MCF 10A (cell line): ENCODE measurements at regions of chr2 and their contacts with region 1.

Region 1: DNA sequence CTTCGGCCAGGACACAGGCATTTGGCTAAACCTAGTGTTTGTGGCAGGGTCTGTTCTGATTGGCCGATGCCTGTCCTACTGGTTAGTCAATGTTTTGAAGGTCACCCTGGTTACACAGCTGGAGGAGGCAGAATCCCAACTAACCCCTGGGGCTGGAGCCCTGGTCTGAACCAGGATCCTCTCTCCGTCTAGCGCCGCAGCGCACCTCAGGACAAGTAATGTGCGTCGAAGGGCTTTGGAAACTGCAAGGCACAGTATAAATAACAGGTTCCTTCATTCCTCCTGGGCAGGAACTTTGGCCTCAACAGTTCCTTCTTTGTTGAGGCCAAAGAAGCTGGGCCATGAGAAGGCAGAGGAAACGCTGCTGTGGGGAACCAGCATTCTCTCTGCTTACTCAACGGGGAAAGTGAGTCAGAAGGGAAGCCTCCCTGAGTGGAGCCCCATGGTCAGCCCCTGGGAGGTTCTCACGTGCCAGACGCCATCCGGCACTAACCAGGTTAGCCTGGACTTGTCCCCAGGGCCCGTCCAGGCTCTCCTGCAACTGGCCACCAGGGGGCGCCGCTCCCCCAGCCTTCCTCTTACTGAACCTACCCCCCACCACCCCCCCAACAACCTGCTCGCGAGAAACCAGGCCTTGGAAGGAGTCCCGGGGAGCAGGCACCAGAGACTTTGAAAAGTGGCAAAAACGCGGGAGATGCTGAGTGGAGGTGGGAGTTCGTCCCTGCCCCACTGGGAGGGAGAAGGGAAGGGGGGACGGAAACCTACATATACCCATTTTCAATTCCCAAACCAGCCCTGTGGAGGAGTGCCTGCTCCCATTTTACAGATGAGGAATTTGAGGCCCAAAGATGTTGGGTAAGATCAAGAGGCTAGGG is 19.8 kb downstream of the TEX44 start:
- DNase-seq: peak; percentile 95
- H3K4me3 Mint-ChIP-seq: peak overlapping the region; percentile 63
- H3K27ac Mint-ChIP-seq: peak overlapping the region; percentile 92
- H3K4me1 Mint-ChIP-seq: peaks cover 38% of the 10 kb centered on the region
- H3K27me3 Mint-ChIP-seq: no peaks in the 10 kb centered on the region
- CTCF ChIP-seq: peak; percentile 95

Region 2: GRCh38 chr2:231648587-231649174 is 36.3 kb after region 1 on chr2:
- CTCF ChIA-PET with region 1: interaction called, 20 read pairs
- POLR2A ChIA-PET with region 1: interaction called, 36 read pairs
- intact Hi-C with region 1: no loop called
- DNase-seq: peak; percentile 86
- H3K4me3 Mint-ChIP-seq: no peak overlapping the region
- H3K27ac Mint-ChIP-seq: no peak overlapping the region
- H3K4me1 Mint-ChIP-seq: peaks cover 16% of the 10 kb centered on the region
- H3K27me3 Mint-ChIP-seq: no peaks in the 10 kb centered on the region
- CTCF ChIP-seq: peak; percentile 73

Region 3: DNA sequence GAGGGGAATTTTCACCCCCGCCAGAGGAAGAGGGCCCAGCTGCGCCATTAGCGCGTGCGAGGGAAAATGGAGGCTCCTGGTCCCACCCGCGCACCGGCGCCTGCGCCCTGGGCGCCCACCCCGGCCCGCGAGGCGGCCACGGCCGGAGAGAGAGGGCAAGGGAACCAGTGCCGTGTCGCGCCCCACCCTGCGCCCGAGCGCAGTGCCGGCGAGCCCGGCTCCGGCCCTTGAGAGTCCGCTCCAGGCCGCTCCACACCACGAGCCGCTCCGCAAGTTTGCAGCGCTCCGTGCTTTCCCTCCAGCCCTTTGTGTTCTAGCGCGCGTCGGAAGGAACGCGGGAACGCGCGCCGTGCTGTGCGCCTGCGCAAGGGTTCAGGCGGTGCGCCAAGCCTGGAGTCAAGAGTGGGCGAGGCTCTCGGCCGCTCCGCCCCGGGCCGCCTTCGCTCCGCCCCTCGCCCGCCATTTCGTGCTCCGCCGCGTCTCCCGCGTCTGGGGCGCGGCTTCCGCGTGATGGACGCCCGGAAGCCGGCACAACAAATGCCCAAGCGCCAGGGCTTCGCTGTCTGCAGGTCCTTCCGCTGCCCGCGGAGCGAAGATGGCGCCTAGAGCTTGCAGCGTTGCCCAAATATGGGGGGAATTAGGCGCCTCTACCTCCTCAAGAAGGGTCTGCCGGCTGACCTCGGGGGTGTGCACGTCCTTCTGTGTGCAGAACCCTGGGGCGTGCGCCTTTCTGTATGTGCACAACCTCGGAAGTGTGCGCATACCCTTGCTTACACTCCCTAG is 49.8 kb after region 1 on chr2:
- CTCF ChIA-PET with region 1: interaction called, 20 read pairs
- POLR2A ChIA-PET with region 1: interaction called, 7 read pairs
- intact Hi-C with region 1: no loop called
- DNase-seq: peak; percentile 97
- H3K4me3 Mint-ChIP-seq: peak overlapping the region; percentile 64
- H3K27ac Mint-ChIP-seq: peak overlapping the region; percentile 57
- H3K4me1 Mint-ChIP-seq: no peaks in the 10 kb centered on the region
- H3K27me3 Mint-ChIP-seq: no peaks in the 10 kb centered on the region
- CTCF ChIP-seq: no peak

Region 4: DNA sequence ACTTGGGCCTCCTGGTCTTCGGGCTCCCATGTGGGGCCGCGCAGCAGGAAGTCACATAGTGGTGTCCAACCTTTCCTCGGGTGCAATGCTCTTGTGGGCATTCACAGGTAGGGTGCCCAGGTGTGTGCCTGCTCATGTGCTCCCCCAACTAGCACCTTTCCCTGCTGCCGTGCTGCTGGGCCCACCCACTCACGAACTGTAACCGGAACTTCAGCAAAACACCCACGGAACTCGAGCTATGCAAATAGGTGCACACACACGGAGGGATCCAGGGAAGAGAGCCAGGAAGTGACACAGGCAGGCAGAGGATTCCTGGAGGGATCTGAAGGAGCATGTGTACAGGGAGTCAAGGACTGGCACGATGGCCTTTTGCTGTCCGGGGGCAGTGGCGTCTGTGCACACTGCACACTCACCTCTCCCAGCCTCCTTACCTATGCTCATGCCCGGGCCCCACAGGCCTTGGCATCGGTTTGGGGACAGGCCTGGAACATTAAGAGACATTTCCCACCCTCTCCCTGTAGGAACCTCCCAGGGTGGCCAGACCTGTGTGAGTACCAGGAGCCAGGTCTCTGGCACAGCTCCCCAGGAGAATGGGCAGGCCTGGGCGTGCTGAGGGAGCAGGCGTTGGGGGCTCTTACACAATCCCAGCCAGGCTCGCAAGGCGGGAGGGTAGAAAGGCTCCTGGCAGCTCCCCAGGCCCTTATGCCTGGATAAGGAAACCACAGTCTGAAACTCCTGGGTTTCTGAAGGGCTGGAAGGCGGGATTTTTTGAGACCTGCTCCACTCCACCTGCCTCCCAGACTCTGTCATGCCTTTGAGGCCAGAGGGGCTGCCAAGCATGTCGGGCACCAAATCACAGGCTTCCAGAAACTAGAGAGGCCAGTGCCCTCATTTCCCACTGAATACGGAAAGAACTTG is 89.3 kb after region 1 on chr2:
- CTCF ChIA-PET with region 1: interaction called, 4 read pairs
- POLR2A ChIA-PET with region 1: interaction called, 21 read pairs
- intact Hi-C with region 1: no loop called
- DNase-seq: peak; percentile 98
- H3K4me3 Mint-ChIP-seq: peak overlapping the region; percentile 58
- H3K27ac Mint-ChIP-seq: peak overlapping the region; percentile 71
- H3K4me1 Mint-ChIP-seq: peaks cover 11% of the 10 kb centered on the region
- H3K27me3 Mint-ChIP-seq: no peaks in the 10 kb centered on the region
- CTCF ChIP-seq: no peak